G401 (cell line): ENCODE measurements at regions of chr2 and their contacts with region 1.

Region 1: GRCh38 chr2:208072250-208072892 is 47.0 kb upstream of the PLEKHM3 start:
- DNase-seq: peak; percentile 79

Region 2: DNA sequence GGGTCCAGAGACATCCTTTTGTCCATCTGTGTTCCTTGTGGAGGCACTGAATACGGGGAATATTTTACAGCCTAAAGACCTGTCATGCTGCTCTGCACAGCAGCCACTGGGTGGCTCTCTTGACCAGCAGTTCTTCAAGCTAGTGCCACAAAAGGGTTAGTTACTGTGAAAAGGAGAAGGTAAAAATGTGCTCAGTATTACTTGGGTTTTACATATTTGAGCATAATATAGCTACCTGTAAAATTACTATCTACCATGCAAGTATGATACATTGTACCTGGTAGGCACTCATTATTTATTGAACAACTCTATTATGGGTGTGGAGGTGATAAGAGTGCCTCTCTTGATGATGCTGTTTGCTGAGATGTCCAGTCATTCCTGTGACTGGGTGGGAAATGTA is 326.2 kb before region 1 on chr2:
- in situ Hi-C with region 1: loop called (anchors 25 kb)
- DNase-seq: peak; percentile 83